HCT116 (cell line): ENCODE measurements at regions of chr3 and their contacts with region 1.

Region 1: GRCh38 chr3:187719628-187720336 is 17.4 kb upstream of the RTP2 start:
- DNase-seq: no peak
- ATAC-seq: peak; percentile 54; the same call in 1 of the 2 replicates
- H3K4me3 ChIP-seq: no peak overlapping the region
- H3K27ac ChIP-seq: peak overlapping the region; percentile 33; the same call in 1 of the 2 replicates
- H3K4me1 ChIP-seq: peaks cover 11 to 13% of the 10 kb centered on the region in 2 experiments; a peak in 3 of 4 replicates
- H3K27me3 ChIP-seq: no peaks in the 10 kb centered on the region
- CTCF ChIP-seq: no peak
- POLR2A ChIP-seq: no peak
- RAD21 ChIP-seq: no peak

Region 2: DNA sequence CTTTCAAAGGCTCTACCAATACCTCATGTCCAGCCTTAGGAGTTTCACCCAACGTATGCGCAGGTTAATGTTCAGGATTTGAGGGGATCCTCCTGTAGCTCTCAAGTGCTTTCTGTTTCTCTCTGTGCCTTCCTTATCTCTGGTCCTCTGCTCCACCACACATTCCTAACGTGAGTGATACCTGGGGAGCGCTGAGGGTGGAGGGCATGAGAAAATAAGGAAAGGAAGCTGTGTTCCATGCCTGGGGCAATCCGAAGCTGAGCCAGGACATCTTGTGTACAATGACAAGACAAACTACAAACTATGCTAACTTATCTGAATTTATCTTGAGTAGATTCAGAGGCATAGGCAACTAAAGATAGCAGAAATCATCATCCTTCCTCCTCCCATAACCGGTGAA is 186.0 kb before region 1 on chr3:
- CTCF ChIA-PET with region 1: no interaction called
- POLR2A ChIA-PET with region 1: no interaction called
- RAD21 ChIA-PET with region 1: no interaction called
- intact Hi-C with region 1: no loop called
- DNase-seq: no peak
- ATAC-seq: no peak
- H3K4me3 ChIP-seq: no peak overlapping the region
- H3K27ac ChIP-seq: no peak overlapping the region
- H3K4me1 ChIP-seq: no peaks in the 10 kb centered on the region
- H3K27me3 ChIP-seq: peaks cover 36% of the 10 kb centered on the region
- CTCF ChIP-seq: no peak
- POLR2A ChIP-seq: no peak
- RAD21 ChIP-seq: no peak

Region 3: GRCh38 chr3:187709155-187709554 is 10.6 kb before region 1 on chr3:
- CTCF ChIA-PET with region 1: interaction called, 15 read pairs
- POLR2A ChIA-PET with region 1: no interaction called
- RAD21 ChIA-PET with region 1: no interaction called
- intact Hi-C with region 1: no loop called
- DNase-seq: peak; percentile 31
- ATAC-seq: peak; percentile 98
- H3K4me3 ChIP-seq: no peak overlapping the region
- H3K27ac ChIP-seq: no peak overlapping the region
- H3K4me1 ChIP-seq: peaks cover 0 to 5% of the 10 kb centered on the region in 2 experiments; a peak in 2 of 4 replicates
- H3K27me3 ChIP-seq: no peaks in the 10 kb centered on the region
- CTCF ChIP-seq: peak; percentile 52 to 68 (median 65); a peak in 5 of 6 replicates
- POLR2A ChIP-seq: no peak
- RAD21 ChIP-seq: peak; percentile 29; the same call in 1 of the 2 replicates